ENCODE measurements at regions of chr17 and their contacts with region 1.

Region 1: DNA sequence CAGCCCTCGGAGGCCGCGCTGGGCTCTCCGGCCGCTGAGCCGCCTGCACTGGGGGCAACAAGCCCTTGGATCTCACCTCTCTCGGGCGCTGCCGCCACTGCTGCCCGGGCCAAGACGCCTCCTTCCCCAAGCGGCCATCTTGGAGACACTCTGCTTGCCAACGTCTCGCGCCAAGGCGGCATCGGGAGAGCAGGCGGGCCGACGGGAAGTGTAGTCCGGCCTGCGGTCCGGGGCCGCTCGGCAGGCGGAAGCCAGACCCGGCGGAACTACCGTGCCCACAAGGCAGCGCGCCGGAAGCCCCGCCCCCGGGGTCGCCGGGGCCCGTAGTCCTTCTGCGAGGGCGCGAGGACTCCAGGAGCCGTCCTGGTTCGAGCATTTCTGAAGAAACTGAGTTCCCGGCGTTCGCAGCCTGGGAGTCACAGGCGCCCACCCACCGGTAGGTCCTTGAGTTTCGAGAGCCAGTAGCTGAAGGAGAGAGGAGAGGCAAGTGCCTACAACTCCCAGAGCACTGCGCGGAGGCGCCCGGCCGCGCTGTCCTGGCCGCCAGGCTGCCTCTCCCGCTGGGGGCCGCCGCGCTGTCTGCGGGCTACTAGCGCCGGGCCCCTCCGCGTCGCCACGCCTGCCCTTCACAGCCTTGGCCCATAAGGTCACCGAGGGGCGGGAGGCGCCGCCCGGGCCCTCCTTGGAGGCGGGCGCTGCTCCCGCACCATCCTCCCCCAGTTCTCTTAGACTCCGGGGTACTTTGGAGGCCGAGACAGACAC is at the start of gene TMEM11:
- DNase-seq: peak; percentile 88 to 93 (median 92)
- ATAC-seq: peak; percentile 94
- H3K4me3 ChIP-seq: peak within 1 kb of the TSS; percentile 96
- H3K27ac ChIP-seq: peak within 1 kb of the TSS; percentile 98
- H3K4me1 ChIP-seq: peaks cover 20 to 31% of the 10 kb centered on the region in 2 experiments; a peak in 4 of 5 replicates
- H3K27me3 ChIP-seq: no peaks in the 10 kb centered on the region
- CTCF ChIP-seq: peak in 1 of 3 experiments; percentile 1; a peak in 1 of 6 replicates
- EP300 ChIP-seq: no peak; the same call in 1 of the 2 replicates
- POLR2A ChIP-seq: peak; percentile 76
- RAD21 ChIP-seq: no peak
- polyA plus RNA-seq, gene TMEM11: 17.4 to 31.9 TPM

Region 2: GRCh38 chr17:21174713-21175112 is 39.5 kb before region 1 on chr17:
- CTCF ChIA-PET with region 1: no interaction called
- POLR2A ChIA-PET with region 1: no interaction called
- in situ Hi-C with region 1: no loop called
- intact Hi-C with region 1: no loop called
- DNase-seq: no peak
- ATAC-seq: no peak
- H3K4me3 ChIP-seq: no peak overlapping the region
- H3K27ac ChIP-seq: no peak overlapping the region
- H3K4me1 ChIP-seq: peaks cover 0 to 9% of the 10 kb centered on the region in 2 experiments; a peak in 2 of 5 replicates
- H3K27me3 ChIP-seq: no peaks in the 10 kb centered on the region
- CTCF ChIP-seq: no peak
- EP300 ChIP-seq: no peak
- POLR2A ChIP-seq: no peak
- RAD21 ChIP-seq: no peak

Region 3: GRCh38 chr17:21199299-21199698 is 14.9 kb before region 1 on chr17:
- CTCF ChIA-PET with region 1: no interaction called
- POLR2A ChIA-PET with region 1: interaction called, 22 read pairs
- in situ Hi-C with region 1: no loop called
- intact Hi-C with region 1: no loop called
- DNase-seq: peak in 2 of 4 experiments; percentile 46 to 54
- ATAC-seq: peak; percentile 88
- H3K4me3 ChIP-seq: no peak overlapping the region
- H3K27ac ChIP-seq: no peak overlapping the region
- H3K4me1 ChIP-seq: peaks cover 0 to 32% of the 10 kb centered on the region in 2 experiments; a peak in 4 of 5 replicates
- H3K27me3 ChIP-seq: no peaks in the 10 kb centered on the region
- CTCF ChIP-seq: no peak
- EP300 ChIP-seq: no peak
- POLR2A ChIP-seq: no peak
- RAD21 ChIP-seq: no peak

Measured in K562 (cell line).